Body of pancreas (tissue), 4 donors: ENCODE measurements at regions of chr1 and their contacts with region 1.

Region 1: GRCh38 chr1:18581420-18581880 is 49.2 kb upstream of the PAX7 start:
- DNase-seq: peak; percentile 35 to 66 (median 50)
- ATAC-seq: no peak
- H3K4me3 ChIP-seq: no peak overlapping the region
- H3K27ac ChIP-seq: no peak overlapping the region
- H3K4me1 ChIP-seq: no peaks in the 10 kb centered on the region
- H3K27me3 ChIP-seq: peaks cover 0 to 7% of the 10 kb centered on the region in 2 donors
- CTCF ChIP-seq: peak; percentile 60 to 84 (median 77)
- POLR2A ChIP-seq: no peak

Region 2: GRCh38 chr1:18100491-18101063 is 480.9 kb before region 1 on chr1:
- intact Hi-C with region 1: loop called (anchors 10 kb)
- DNase-seq: peak; percentile 64 to 77 (median 76)
- ATAC-seq: peak; percentile 64
- H3K4me3 ChIP-seq: no peak overlapping the region
- H3K27ac ChIP-seq: no peak overlapping the region
- H3K4me1 ChIP-seq: no peaks in the 10 kb centered on the region
- H3K27me3 ChIP-seq: peaks cover 0 to under 1% of the 10 kb centered on the region in 2 donors
- CTCF ChIP-seq: peak; percentile 70 to 91 (median 80)
- POLR2A ChIP-seq: no peak